ENCODE measurements at regions of chr16 and their contacts with region 1.

Region 1: DNA sequence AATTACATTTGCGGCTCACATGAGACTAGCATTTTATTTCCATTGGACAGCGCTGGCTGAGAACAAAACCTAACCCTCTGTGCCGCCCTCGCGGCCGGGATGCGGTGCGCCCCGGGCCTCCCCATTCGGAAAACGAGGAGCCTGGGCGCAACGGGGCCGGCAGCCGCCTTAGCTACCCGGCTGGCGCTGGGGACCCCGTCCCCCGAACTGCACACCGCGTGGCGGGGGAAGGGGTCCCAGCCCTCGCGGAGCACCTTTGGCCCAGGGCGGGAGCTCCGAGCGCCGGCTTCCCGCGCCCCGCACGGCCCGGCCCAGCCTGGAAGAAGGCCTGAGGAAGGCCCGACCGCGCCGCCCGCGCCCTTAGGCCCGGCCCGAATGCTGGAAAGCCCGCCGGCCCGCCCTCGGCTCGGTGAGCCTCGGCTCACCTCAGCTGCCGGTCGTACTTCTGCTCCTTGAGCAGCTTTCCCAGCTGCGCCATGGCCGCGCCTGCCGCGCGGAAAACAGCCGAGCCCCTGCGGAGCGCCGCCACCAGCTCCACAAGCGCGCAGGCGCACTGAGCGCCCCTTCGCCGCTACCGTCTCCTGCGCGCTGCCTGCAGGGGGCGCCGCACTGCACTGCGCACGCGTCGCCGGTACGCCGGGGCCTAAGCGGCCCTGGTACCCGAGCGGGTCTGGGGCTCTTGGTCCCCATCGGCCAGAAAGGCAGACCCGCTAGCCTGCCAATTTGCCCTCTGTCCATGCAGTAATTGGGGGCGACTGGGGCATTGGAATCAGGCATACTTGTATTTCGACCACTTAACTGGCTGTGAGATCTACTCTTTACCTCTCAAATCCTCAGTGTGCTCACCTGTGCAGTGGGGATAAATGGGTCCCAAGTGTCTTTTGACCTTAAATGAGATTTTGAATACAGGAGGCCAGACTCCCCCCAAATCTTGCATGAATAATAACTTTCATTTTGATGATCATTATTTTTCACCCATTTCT is at the start of gene NAE1:
- DNase-seq: peak; percentile 91
- H3K4me3 ChIP-seq: peak within 1 kb of the TSS; percentile 64 to 90 (median 88)
- H3K27ac ChIP-seq: peak within 1 kb of the TSS; percentile 38
- H3K4me1 ChIP-seq: peaks cover 8% of the 10 kb centered on the region
- H3K27me3 ChIP-seq: peaks cover 2 to 15% of the 10 kb centered on the region in 2 experiments
- CTCF ChIP-seq: peak; percentile 99
- POLR2A ChIP-seq: peak; percentile 91
- total RNA-seq, gene NAE1: 64.3 and 67.6 TPM in 2 replicates

Region 2: GRCh38 chr16:66740010-66740409 is 90.7 kb before region 1 on chr16:
- CTCF ChIA-PET with region 1: interaction called, 10 read pairs
- POLR2A ChIA-PET with region 1: interaction called, 4 read pairs
- dilution Hi-C with region 1: no loop called
- intact Hi-C with region 1: no loop called
- DNase-seq: peak; percentile 54
- H3K4me3 ChIP-seq: no peak overlapping the region
- H3K27ac ChIP-seq: peak overlapping the region; percentile 97
- H3K4me1 ChIP-seq: peaks cover 34% of the 10 kb centered on the region
- H3K27me3 ChIP-seq: no peaks in the 10 kb centered on the region
- CTCF ChIP-seq: peak; percentile 58 to 60
- POLR2A ChIP-seq: no peak

Region 3: GRCh38 chr16:66774981-66775380 is 55.7 kb before region 1 on chr16:
- CTCF ChIA-PET with region 1: interaction called, 10 read pairs
- POLR2A ChIA-PET with region 1: no interaction called
- dilution Hi-C with region 1: no loop called
- intact Hi-C with region 1: no loop called
- DNase-seq: peak; percentile 24
- H3K4me3 ChIP-seq: no peak overlapping the region
- H3K27ac ChIP-seq: no peak overlapping the region
- H3K4me1 ChIP-seq: peaks cover 2% of the 10 kb centered on the region
- H3K27me3 ChIP-seq: no peaks in the 10 kb centered on the region
- CTCF ChIP-seq: no peak
- POLR2A ChIP-seq: no peak

Region 4: GRCh38 chr16:66811043-66811442 is 19.7 kb before region 1 on chr16:
- CTCF ChIA-PET with region 1: interaction called, 13 read pairs
- POLR2A ChIA-PET with region 1: no interaction called
- dilution Hi-C with region 1: no loop called
- intact Hi-C with region 1: no loop called
- DNase-seq: no peak
- H3K4me3 ChIP-seq: no peak overlapping the region
- H3K27ac ChIP-seq: no peak overlapping the region
- H3K4me1 ChIP-seq: no peaks in the 10 kb centered on the region
- H3K27me3 ChIP-seq: no peaks in the 10 kb centered on the region
- CTCF ChIP-seq: no peak
- POLR2A ChIP-seq: no peak

Region 5: DNA sequence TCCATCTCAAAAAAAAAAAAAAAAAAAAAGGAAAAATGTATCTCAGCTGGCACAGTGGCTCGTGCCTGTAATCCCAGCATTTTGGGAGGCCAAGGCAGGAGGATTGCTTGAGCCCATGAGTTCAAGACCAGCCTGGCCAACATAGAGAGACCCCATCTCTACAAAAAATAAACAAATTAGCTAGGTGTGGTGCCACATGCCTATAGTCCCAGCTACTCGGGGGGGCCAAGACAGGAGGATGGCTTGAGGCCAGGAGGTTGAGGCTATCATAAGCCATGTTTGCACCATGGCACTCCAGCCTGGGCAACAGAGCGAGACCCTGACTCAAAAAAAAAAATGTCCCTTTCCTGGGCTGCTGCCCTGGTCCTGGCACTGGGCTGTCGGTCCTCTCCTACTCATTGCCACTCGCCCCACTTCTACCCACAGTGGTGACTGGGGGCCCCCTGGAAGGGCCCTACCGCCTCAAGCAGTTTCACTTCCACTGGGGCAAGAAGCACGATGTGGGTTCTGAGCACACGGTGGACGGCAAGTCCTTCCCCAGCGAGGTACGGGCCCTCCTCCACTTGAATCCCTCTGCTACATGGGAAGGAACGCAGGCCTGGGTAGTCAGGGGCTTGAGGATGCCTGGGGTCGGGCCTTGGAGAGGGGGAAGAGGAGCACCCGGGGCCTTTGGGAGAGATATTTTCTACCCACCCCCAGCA is 19.6 kb after region 1 on chr16:
- CTCF ChIA-PET with region 1: interaction called, 18 read pairs
- POLR2A ChIA-PET with region 1: no interaction called
- dilution Hi-C with region 1: no loop called
- intact Hi-C with region 1: no loop called
- DNase-seq: no peak
- H3K4me3 ChIP-seq: no peak overlapping the region
- H3K27ac ChIP-seq: no peak overlapping the region
- H3K4me1 ChIP-seq: no peaks in the 10 kb centered on the region
- H3K27me3 ChIP-seq: peaks cover 22 to 26% of the 10 kb centered on the region in 2 experiments
- CTCF ChIP-seq: no peak
- POLR2A ChIP-seq: no peak

Region 6: DNA sequence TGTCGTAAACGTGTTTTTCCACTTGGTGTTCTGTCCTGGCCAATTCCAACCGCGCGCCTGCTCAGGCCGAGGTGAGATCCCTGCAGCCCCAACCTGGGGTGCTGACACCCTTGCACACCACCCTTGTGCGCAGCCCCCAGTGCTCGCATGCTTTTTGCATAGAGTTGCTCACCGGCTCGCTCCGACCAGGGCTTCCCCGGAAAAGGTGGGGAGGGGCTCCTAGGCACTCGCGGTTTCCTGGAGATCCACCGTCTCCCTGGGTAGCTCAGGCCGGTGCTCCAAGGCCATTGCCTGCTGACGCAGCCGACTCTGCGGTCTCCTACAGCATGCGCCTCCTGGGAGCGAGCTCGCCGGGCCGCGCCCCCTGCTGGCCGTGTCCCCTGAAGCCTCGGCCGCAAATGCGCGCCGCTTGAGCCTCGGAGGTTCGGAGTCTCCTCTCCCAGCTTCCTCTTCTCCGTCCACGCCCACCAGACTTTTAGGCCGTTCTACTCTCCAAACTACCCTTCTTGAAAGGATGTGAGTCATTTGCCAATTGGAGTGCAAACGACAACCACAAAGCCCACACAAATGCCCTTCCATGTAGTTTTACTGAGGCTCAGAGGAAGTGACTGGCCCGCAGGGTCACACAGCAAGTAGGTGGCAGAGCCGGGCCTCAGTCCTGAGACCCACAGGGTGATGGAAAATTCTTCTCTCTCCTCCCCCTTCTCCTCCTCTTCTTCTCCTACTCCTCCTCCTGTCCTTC is 42.4 kb after region 1 on chr16:
- CTCF ChIA-PET with region 1: interaction called, 153 read pairs
- POLR2A ChIA-PET with region 1: interaction called, 7 read pairs
- dilution Hi-C with region 1: no loop called
- intact Hi-C with region 1: loop called (anchors 1 kb)
- DNase-seq: peak; percentile 96
- H3K4me3 ChIP-seq: no peak overlapping the region
- H3K27ac ChIP-seq: no peak overlapping the region
- H3K4me1 ChIP-seq: peaks cover 12% of the 10 kb centered on the region
- H3K27me3 ChIP-seq: peaks cover 0 to 2% of the 10 kb centered on the region in 2 experiments
- CTCF ChIP-seq: peak; percentile 99
- POLR2A ChIP-seq: peak; percentile 58

Region 7: DNA sequence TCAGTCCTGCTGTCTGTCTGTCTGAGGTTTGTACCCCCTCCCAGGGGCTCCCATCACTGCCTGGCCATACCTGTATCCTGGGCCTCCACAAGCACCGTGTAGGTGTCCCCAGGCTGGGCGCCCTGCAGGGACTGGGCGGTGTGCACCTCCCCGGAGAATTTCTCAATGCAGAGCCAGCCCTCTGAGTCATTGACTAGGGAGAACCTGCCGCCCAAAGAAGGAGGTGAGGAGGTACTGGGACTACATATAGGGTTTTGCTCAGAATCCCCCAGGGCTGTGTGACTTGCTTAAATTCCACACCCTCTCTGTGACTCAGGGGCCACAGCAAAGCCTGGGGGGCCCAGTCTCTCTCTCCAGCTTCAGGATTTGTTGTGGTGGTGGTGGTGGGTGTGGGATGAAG is 80.4 kb after region 1 on chr16:
- CTCF ChIA-PET with region 1: interaction called, 10 read pairs
- POLR2A ChIA-PET with region 1: no interaction called
- dilution Hi-C with region 1: no loop called
- intact Hi-C with region 1: no loop called
- DNase-seq: no peak
- H3K4me3 ChIP-seq: no peak overlapping the region
- H3K27ac ChIP-seq: no peak overlapping the region
- H3K4me1 ChIP-seq: no peaks in the 10 kb centered on the region
- H3K27me3 ChIP-seq: peaks cover 0 to 2% of the 10 kb centered on the region in 2 experiments
- CTCF ChIP-seq: no peak
- POLR2A ChIP-seq: no peak

Region 8: GRCh38 chr16:66947302-66948065 is 116.8 kb after region 1 on chr16:
- CTCF ChIA-PET with region 1: no interaction called
- POLR2A ChIA-PET with region 1: no interaction called
- dilution Hi-C with region 1: no loop called
- intact Hi-C with region 1: no loop called
- DNase-seq: peak; percentile 90
- H3K4me3 ChIP-seq: peak overlapping the region; percentile 18 to 45 (median 33)
- H3K27ac ChIP-seq: no peak overlapping the region
- H3K4me1 ChIP-seq: peaks cover 12% of the 10 kb centered on the region
- H3K27me3 ChIP-seq: peaks cover 4 to 10% of the 10 kb centered on the region in 2 experiments
- CTCF ChIP-seq: peak; percentile 80 to 95
- POLR2A ChIP-seq: no peak

Measured in endothelial cell of umbilical vein (primary cell).